ENCODE measurements at regions of chr3 and their contacts with region 1.

Region 1: GRCh38 chr3:129026728-129027543 is 25.8 kb downstream of the EFCC1 start:
- DNase-seq: peak; percentile 91 to 95 (median 94)
- H3K4me3 ChIP-seq: peak overlapping the region; percentile 42 to 57
- H3K4me3 Mint-ChIP-seq: peak overlapping the region; percentile 76 to 88 (median 85)
- H3K27ac ChIP-seq: peak overlapping the region; percentile 55
- H3K27ac Mint-ChIP-seq: peak overlapping the region; percentile 91 to 97 (median 97)
- H3K4me1 ChIP-seq: peaks cover 16% of the 10 kb centered on the region
- H3K4me1 Mint-ChIP-seq: peaks cover 10 to 25% (median 16%) of the 10 kb centered on the region in 4 donors
- H3K27me3 ChIP-seq: no peaks in the 10 kb centered on the region
- H3K27me3 Mint-ChIP-seq: no peaks in the 10 kb centered on the region

Region 2: GRCh38 chr3:128844502-128844901 is 182.4 kb before region 1 on chr3:
- CTCF ChIA-PET with region 1: no interaction called
- POLR2A ChIA-PET with region 1: no interaction called
- intact Hi-C with region 1: no loop called
- DNase-seq: no peak
- H3K4me3 ChIP-seq: no peak overlapping the region
- H3K4me3 Mint-ChIP-seq: peak overlapping the region in 3 of 8 donors; percentile 20 to 91 (median 34)
- H3K27ac ChIP-seq: no peak overlapping the region
- H3K27ac Mint-ChIP-seq: peak overlapping the region in 2 of 7 donors; percentile 13 to 50
- H3K4me1 ChIP-seq: peaks cover 18% of the 10 kb centered on the region
- H3K4me1 Mint-ChIP-seq: peaks cover 8 to 14% (median 11%) of the 10 kb centered on the region in 4 donors
- H3K27me3 ChIP-seq: no peaks in the 10 kb centered on the region
- H3K27me3 Mint-ChIP-seq: no peaks in the 10 kb centered on the region

Region 3: GRCh38 chr3:128863560-128863959 is 163.4 kb before region 1 on chr3:
- CTCF ChIA-PET with region 1: no interaction called
- POLR2A ChIA-PET with region 1: no interaction called
- intact Hi-C with region 1: no loop called
- DNase-seq: no peak
- H3K4me3 ChIP-seq: no peak overlapping the region
- H3K4me3 Mint-ChIP-seq: no peak overlapping the region
- H3K27ac ChIP-seq: no peak overlapping the region
- H3K27ac Mint-ChIP-seq: no peak overlapping the region
- H3K4me1 ChIP-seq: no peaks in the 10 kb centered on the region
- H3K4me1 Mint-ChIP-seq: no peaks in the 10 kb centered on the region
- H3K27me3 ChIP-seq: no peaks in the 10 kb centered on the region
- H3K27me3 Mint-ChIP-seq: no peaks in the 10 kb centered on the region

Region 4: GRCh38 chr3:128879125-128879969 is 147.6 kb before region 1 on chr3 and contains the start of gene ACAD9:
- CTCF ChIA-PET with region 1: no interaction called
- POLR2A ChIA-PET with region 1: interaction called, 3 read pairs
- intact Hi-C with region 1: loop called (anchors 5 kb)
- DNase-seq: peak; percentile 97
- H3K4me3 ChIP-seq: peak within 1 kb of the TSS; percentile 82 to 91
- H3K4me3 Mint-ChIP-seq: peak within 1 kb of the TSS; percentile 85 to 97 (median 94)
- H3K27ac ChIP-seq: peak within 1 kb of the TSS; percentile 92
- H3K27ac Mint-ChIP-seq: peak within 1 kb of the TSS; percentile 92 to 99 (median 99)
- H3K4me1 ChIP-seq: peaks cover 38% of the 10 kb centered on the region
- H3K4me1 Mint-ChIP-seq: peaks cover 47 to 79% (median 61%) of the 10 kb centered on the region in 4 donors
- H3K27me3 ChIP-seq: no peaks in the 10 kb centered on the region
- H3K27me3 Mint-ChIP-seq: no peaks in the 10 kb centered on the region
- total RNA-seq, gene ACAD9: 54.9 to 62.2 TPM

Region 5: GRCh38 chr3:129003578-129004160 is 23.3 kb before region 1 on chr3:
- CTCF ChIA-PET with region 1: interaction called, 15 read pairs
- POLR2A ChIA-PET with region 1: interaction called, 19 read pairs
- intact Hi-C with region 1: loop called (anchors 1 kb)
- DNase-seq: peak; percentile 50 to 64 (median 57)
- H3K4me3 ChIP-seq: no peak overlapping the region
- H3K4me3 Mint-ChIP-seq: peak overlapping the region in 4 of 8 donors; percentile 59 to 73 (median 64)
- H3K27ac ChIP-seq: no peak overlapping the region
- H3K27ac Mint-ChIP-seq: peak overlapping the region in 1 of 7 donors; percentile 47
- H3K4me1 ChIP-seq: peaks cover 36% of the 10 kb centered on the region
- H3K4me1 Mint-ChIP-seq: peaks cover 20 to 47% (median 32%) of the 10 kb centered on the region in 4 donors
- H3K27me3 ChIP-seq: peaks cover 25% of the 10 kb centered on the region
- H3K27me3 Mint-ChIP-seq: peaks cover 22 to 27% of the 10 kb centered on the region in 2 donors

Region 6: DNA sequence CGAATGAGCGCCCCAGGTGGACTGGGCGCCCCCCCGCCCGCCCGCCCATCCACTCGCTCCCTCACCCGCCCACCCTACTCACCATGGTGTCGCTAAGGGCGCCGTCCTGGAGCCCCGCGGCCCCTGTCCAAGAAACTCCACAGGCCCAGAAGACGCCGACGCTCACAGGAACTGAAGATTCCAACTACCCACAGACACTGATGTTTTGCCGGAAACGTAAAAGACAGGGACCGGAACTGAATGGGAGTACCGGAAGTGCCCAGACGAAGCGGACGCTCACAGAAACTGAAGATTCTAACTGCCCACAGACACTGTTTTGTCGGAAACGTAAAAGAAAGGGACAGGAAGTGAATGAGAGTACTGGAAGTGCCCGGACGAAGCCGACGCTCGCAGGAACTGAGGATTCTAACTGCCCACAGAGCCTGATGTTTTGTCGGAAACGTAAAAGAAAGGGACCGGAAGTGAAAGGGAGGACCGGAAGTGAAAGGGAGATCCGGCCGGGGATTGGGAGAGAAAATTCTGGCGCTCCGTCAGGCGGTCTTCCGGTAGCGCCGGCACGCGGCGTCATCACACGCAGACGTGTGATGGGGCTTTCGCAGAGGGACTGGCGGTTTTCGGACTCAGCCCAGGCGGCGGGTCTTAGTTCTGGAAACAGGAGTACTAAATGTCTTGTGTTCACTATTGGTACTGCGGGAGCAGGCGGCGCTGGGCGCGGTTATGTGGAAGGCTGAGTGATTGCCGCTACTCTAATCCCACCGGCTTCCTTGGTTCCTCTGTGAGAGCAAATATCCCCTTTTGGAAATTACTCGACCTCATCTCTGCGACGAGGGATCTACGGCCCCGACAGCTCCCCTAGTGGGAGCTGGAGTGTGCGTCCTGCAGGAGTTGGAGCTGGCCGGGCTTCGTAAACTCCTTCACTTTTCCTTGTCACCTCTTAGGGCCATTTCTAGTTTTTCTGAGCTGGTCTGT is 134.2 kb after region 1 on chr3 and contains the start of gene ISY1:
- CTCF ChIA-PET with region 1: interaction called, 5 read pairs
- POLR2A ChIA-PET with region 1: interaction called, 12 read pairs
- intact Hi-C with region 1: loop called (anchors 1 kb)
- DNase-seq: peak; percentile 90 to 93 (median 92)
- H3K4me3 ChIP-seq: peak within 1 kb of the TSS; percentile 75 to 94
- H3K4me3 Mint-ChIP-seq: peak within 1 kb of the TSS; percentile 96 to 100 (median 97)
- H3K27ac ChIP-seq: peak within 1 kb of the TSS; percentile 97
- H3K27ac Mint-ChIP-seq: peak within 1 kb of the TSS; percentile 98 to 100 (median 99)
- H3K4me1 ChIP-seq: peaks cover 23% of the 10 kb centered on the region
- H3K4me1 Mint-ChIP-seq: peaks cover 24 to 59% (median 37%) of the 10 kb centered on the region in 4 donors
- H3K27me3 ChIP-seq: no peaks in the 10 kb centered on the region
- H3K27me3 Mint-ChIP-seq: no peaks in the 10 kb centered on the region
- total RNA-seq, gene ISY1: 29.5 to 34.3 TPM

Region 7: DNA sequence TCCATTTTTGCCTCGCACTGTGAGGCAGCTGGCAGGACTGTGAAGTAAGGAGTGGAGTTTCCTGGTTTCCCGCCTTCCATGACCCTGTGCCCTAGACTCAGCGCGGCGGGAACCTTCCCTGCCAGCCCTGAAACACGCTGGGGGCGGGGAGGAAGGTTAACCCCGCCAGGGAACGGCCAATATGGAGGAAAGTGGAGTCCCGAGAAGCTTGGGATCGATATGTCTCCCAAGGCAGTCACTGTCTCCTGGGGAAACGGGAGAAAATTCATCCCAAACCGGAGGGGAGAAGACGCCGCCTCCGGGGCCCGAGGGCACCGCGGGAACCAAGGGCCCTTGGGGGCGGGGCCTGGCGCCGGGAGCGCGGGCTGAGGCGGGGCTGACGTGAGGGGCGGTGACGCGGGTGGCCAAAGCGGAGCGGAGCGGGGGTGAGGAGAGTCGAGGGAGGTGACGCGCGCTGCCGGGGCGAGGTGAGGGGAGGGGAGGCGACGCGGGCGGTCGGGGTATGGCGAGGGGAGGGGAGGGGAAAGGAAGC is 251.6 kb after region 1 on chr3 and contains the start of gene HMCES:
- CTCF ChIA-PET with region 1: no interaction called
- POLR2A ChIA-PET with region 1: no interaction called
- intact Hi-C with region 1: loop called (anchors 1 kb)
- DNase-seq: peak; percentile 93 to 97 (median 95)
- H3K4me3 ChIP-seq: peak within 1 kb of the TSS; percentile 69 to 85
- H3K4me3 Mint-ChIP-seq: peak within 1 kb of the TSS; percentile 94 to 99 (median 98)
- H3K27ac ChIP-seq: peak within 1 kb of the TSS; percentile 99
- H3K27ac Mint-ChIP-seq: peak within 1 kb of the TSS; percentile 90 to 100 (median 99)
- H3K4me1 ChIP-seq: peaks cover 44% of the 10 kb centered on the region
- H3K4me1 Mint-ChIP-seq: peaks cover 22 to 50% (median 38%) of the 10 kb centered on the region in 4 donors
- H3K27me3 ChIP-seq: no peaks in the 10 kb centered on the region
- H3K27me3 Mint-ChIP-seq: no peaks in the 10 kb centered on the region
- total RNA-seq, gene HMCES: 50.1 to 52.5 TPM

Measured in CD4-positive, alpha-beta memory T cell (primary cell).